Gastrocnemius medialis (tissue), 4 donors: ENCODE measurements at regions of chr10 and their contacts with region 1.

Region 1: DNA sequence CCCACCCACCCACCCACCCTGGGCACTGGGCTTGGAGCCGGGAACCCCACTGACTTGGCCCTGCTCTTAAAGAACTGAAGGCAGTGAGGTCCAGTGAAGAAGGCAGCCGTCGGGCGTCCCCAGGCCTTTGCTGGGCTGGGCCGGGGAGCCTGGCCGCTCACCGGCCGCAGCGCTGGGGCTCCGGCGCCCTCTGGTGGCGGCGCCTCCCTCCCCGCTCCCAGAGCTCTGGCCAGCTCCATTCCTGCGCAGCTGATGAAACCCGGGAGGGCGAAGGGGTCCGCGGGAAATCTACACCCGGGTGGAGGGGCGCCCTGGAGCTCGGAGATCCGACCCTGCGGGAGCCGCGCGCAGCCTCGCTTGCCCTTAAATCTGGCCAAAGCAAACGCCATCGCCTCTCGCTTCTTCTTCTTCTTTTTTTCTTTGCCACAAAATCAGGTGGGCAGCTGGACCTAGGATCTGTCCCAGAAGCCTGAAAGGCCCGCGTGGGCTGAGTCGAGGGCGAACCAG is 1.7 kb upstream of the CXCL12 start:
- DNase-seq: peak in 1 of 2 donors; percentile 55
- ATAC-seq: peak; percentile 40 to 51
- H3K4me3 ChIP-seq: peak overlapping the region in 3 of 4 donors; percentile 18 to 32 (median 25)
- H3K27ac ChIP-seq: peak overlapping the region in 3 of 4 donors; percentile 60 to 87 (median 82)
- H3K4me1 ChIP-seq: peaks cover 19 to 26% of the 10 kb centered on the region in 2 donors
- H3K27me3 ChIP-seq: no peaks in the 10 kb centered on the region
- CTCF ChIP-seq: peak; percentile 79 to 95 (median 93)
- POLR2A ChIP-seq: no peak

Region 2: DNA sequence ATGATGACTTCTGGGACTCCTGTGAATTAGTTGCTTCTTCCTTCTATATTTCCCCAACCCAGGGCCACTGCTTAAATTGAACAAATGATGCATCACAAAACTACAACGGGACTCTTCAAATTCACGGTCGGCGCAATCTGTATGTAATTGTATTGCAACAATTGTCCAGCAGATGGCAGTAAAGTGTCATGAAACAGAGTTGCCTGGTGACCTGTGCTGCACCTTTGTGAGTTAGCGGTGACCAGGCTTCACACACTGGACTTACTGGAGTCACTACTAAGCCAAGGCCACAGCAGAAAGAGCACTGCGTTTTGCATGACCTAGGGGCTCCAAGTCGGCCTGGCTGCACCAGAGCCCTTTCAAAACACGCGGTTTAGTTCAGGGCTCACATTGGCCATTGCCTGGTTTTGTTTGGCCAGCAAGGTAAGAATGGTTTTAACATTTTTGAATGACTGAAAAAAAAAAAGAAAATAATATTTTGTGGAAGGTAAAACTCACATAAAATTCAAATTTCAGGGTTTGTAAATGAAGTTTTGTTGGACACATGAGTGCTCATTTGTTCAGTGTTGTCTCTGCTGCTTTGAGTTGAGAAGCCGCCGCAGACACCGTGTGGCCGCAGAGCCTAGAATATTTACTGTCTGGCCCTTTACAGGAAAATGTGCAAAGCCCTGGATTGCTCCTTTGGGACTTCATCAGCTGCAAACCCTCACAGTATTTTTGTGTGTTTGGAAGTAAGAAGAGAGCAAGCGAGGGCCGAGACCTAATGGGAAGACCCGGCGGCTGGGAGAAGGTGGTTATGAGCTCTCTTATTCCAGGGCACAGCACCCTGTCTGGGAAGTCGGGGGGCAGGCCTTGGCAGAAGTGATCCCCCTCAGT is 714.7 kb before region 1 on chr10:
- in situ Hi-C with region 1: loop called (anchors 5 to 10 kb)
- intact Hi-C with region 1: loop called (anchors 1 kb)
- DNase-seq: peak; percentile 14 to 44
- ATAC-seq: peak; percentile 73 to 83
- H3K4me3 ChIP-seq: no peak overlapping the region
- H3K27ac ChIP-seq: no peak overlapping the region
- H3K4me1 ChIP-seq: no peaks in the 10 kb centered on the region
- H3K27me3 ChIP-seq: peaks cover 8 to 16% (median 8%) of the 10 kb centered on the region in 3 donors
- CTCF ChIP-seq: peak; percentile 76 to 88 (median 82)
- POLR2A ChIP-seq: no peak

Region 3: DNA sequence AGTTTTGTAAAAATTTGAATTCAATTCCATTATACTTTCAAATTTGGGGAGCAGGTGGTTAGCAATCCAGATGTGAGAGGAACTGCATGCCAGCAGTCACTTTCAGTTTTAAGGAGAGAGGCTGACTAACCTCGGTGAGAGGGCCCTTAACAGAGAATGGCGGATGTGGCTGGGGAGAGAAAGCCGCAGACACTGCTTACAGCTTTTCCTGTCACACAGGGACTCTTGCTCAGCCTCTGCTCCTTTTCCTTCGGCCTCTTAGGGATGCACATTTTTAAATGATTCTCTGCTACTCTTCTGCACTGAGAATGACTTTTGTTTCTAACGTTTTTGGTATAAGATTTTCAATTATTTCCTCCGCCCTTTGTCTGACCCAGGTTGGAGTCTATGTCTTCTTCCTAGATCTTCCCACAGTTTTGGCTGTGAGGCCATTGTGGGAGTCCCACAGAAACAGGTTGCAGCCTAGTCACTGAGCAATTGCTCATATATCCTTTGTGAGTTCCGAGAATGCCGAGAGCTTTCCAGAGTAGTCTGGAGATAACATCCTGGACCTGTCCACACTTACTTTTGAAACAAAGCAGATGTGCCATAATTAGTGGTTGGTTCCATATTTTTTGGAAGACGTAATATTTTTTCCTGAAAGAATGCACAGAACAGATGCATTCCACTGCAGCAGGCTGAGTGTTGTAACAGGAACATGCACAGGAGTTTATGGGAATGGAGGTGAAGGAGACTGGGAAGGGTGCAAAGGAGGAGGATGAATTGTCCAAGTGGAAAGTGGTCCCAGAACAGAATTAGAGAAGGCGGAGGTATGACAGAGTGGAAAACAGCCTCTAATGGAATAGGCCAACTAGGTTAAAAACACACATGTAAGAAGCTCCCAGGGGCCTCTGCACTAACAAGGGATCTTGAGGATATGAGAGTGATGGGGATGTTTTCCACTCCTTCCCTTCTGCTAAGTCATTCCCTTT is 570.0 kb before region 1 on chr10:
- in situ Hi-C with region 1: no loop called
- intact Hi-C with region 1: loop called (anchors 10 kb)
- DNase-seq: no peak
- ATAC-seq: peak; percentile 58 to 60
- H3K4me3 ChIP-seq: no peak overlapping the region
- H3K27ac ChIP-seq: peak overlapping the region; percentile 35 to 55 (median 49)
- H3K4me1 ChIP-seq: peaks cover 0 to 4% of the 10 kb centered on the region in 2 donors
- H3K27me3 ChIP-seq: no peaks in the 10 kb centered on the region
- CTCF ChIP-seq: no peak
- POLR2A ChIP-seq: no peak

Region 4: GRCh38 chr10:44300666-44301649 is 85.6 kb before region 1 on chr10:
- in situ Hi-C with region 1: loop called (anchors 5 to 10 kb)
- intact Hi-C with region 1: loop called (anchors 1 kb)
- DNase-seq: no peak
- ATAC-seq: peak in 1 of 2 donors; percentile 33
- H3K4me3 ChIP-seq: no peak overlapping the region
- H3K27ac ChIP-seq: no peak overlapping the region
- H3K4me1 ChIP-seq: peaks cover 0 to 3% of the 10 kb centered on the region in 2 donors
- H3K27me3 ChIP-seq: no peaks in the 10 kb centered on the region
- CTCF ChIP-seq: no peak
- POLR2A ChIP-seq: no peak

Region 5: GRCh38 chr10:44310762-44311562 is 75.6 kb before region 1 on chr10:
- in situ Hi-C with region 1: loop called in 3 of 4 experiments (anchors 5 to 10 kb)
- intact Hi-C with region 1: loop called (anchors 1 kb)
- DNase-seq: peak; percentile 80 to 88
- ATAC-seq: peak; percentile 73 to 83
- H3K4me3 ChIP-seq: peak overlapping the region; percentile 27 to 62 (median 36)
- H3K27ac ChIP-seq: peak overlapping the region in 3 of 4 donors; percentile 21 to 39 (median 35)
- H3K4me1 ChIP-seq: peaks cover 0 to 8% of the 10 kb centered on the region in 2 donors
- H3K27me3 ChIP-seq: no peaks in the 10 kb centered on the region
- CTCF ChIP-seq: peak; percentile 85 to 97 (median 93)
- POLR2A ChIP-seq: no peak

Region 6: GRCh38 chr10:44539178-44539577 is 152.6 kb after region 1 on chr10:
- in situ Hi-C with region 1: no loop called
- intact Hi-C with region 1: no loop called
- DNase-seq: no peak
- ATAC-seq: no peak
- H3K4me3 ChIP-seq: no peak overlapping the region
- H3K27ac ChIP-seq: no peak overlapping the region
- H3K4me1 ChIP-seq: no peaks in the 10 kb centered on the region
- H3K27me3 ChIP-seq: no peaks in the 10 kb centered on the region
- CTCF ChIP-seq: no peak
- POLR2A ChIP-seq: no peak

Region 7: GRCh38 chr10:44857363-44858016 is 470.9 kb after region 1 on chr10:
- in situ Hi-C with region 1: loop called in 2 of 4 experiments (anchors 25 kb)
- intact Hi-C with region 1: loop called (anchors 2 kb)
- DNase-seq: peak; percentile 25 to 29
- ATAC-seq: peak; percentile 27 to 57
- H3K4me3 ChIP-seq: no peak overlapping the region
- H3K27ac ChIP-seq: no peak overlapping the region
- H3K4me1 ChIP-seq: no peaks in the 10 kb centered on the region
- H3K27me3 ChIP-seq: no peaks in the 10 kb centered on the region
- CTCF ChIP-seq: peak; percentile 61 to 95 (median 84)
- POLR2A ChIP-seq: no peak

Region 8: DNA sequence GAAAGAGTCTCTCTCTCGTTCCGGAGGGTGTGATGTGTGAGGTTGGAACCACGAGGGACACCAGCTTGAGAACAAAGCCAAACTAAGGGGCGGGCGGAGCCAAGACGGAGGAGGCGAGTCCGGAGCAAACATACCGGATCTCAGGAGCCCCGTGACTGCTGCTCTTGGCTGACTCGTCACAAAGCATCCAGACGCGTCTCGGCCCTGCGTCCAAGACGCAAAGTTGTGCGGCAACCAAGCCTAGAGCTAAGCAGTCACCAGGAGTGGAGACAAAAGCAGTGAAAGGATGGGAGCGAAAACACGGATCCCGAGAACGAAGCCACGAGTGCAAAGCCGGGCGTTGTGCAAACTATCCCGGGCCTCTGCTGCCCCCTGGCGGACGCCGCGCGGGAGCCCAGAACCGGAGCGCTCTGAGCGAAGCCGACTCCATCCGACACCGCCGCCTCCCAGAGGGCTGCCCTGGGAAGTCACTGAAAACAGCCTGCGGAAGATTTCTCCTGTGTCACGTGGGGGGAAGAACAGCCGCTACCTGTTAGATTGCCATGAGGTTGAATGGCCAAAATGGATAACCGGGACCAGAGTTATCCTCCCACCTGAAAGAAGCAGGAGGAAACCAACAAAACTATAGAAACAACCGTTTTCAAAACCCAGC is 478.2 kb after region 1 on chr10:
- in situ Hi-C with region 1: loop called in 2 of 4 experiments (anchors 25 kb)
- intact Hi-C with region 1: no loop called
- DNase-seq: peak; percentile 71 to 78
- ATAC-seq: peak; percentile 91 to 94
- H3K4me3 ChIP-seq: peak overlapping the region; percentile 51 to 64 (median 60)
- H3K27ac ChIP-seq: peak overlapping the region; percentile 36 to 65 (median 56)
- H3K4me1 ChIP-seq: peaks cover 0 to 9% of the 10 kb centered on the region in 2 donors
- H3K27me3 ChIP-seq: peaks cover 0 to 6% (median 0%) of the 10 kb centered on the region in 3 donors
- CTCF ChIP-seq: peak; percentile 86 to 98 (median 95)
- POLR2A ChIP-seq: no peak